ENCODE measurements at regions of chrX and their contacts with region 1.

Region 1: DNA sequence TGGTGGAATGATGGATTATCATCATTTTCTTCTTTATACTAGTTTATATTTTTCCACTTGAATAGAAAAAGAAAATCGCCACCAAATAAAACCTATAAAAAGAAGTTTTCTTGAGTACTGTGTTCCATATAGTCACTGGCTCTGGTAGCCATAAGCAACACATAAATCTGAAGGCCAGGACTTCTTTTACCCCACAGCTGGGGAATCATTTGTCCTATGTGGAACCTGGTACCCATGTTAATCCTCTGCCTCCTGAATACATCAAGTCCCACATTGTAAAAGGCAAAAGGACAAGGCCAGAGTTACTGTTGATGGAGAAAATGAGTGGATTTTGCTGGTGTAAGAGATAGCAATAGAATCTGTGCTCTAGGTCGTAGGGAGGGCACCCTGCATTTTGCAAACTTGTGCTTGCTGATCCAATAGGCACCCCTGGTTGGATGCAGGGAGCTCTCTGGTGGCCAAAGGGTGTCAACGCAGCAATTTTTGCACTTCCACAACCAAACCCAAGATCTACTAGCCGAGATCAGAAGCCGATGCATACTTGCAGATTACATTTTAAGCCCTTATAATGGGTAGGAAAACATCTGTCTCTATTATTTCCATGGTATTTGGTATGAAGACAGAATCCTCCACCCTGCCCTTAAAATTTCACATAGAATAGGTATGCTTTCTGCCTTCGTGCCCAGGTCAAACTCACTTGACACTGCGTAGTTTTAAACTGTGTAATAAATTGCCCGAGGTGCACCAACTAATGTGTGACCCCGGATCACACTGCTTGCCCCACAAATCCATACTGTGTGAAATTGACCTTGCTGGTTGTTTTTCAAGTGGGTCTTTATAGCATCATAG is 146.2 kb upstream of the SCML1 start:
- DNase-seq: peak; percentile 44 to 60 (median 52)
- ATAC-seq: peak; percentile 77 to 90 (median 83)
- H3K4me3 ChIP-seq: peak overlapping the region in 5 of 12 donors; percentile 3 to 43 (median 33)
- H3K27ac ChIP-seq: peak overlapping the region in 5 of 12 donors; percentile 3 to 72 (median 38)
- H3K4me1 ChIP-seq: peaks cover 0 to 19% (median 2%) of the 10 kb centered on the region in 12 donors
- H3K27me3 ChIP-seq: peaks cover 0 to 4% (median 0%) of the 10 kb centered on the region in 9 donors
- CTCF ChIP-seq: peak; percentile 52 to 75 (median 64)
- POLR2A ChIP-seq: no peak

Region 2: DNA sequence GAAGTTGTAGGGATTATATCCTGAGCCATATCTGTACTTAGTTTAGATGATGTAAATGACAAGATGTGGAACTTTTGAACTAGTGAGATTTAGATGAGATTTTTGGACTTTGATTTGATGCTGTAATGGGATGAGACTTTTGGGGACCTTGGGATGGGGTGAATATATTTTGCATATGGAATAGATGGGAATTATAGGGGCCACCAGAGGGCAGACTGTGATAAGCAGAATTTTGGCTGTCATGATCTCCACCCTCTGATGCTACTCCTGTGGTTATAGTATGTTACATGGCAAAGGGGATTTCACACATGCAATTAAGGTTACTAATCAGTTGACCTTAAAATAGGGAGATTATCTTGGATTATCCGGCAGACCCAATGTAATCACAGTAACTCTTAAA is 430.1 kb before region 1 on chrX:
- intact Hi-C with region 1: no loop called
- DNase-seq: no peak
- ATAC-seq: no peak
- H3K4me3 ChIP-seq: no peak overlapping the region
- H3K27ac ChIP-seq: no peak overlapping the region
- H3K4me1 ChIP-seq: no peaks in the 10 kb centered on the region
- H3K27me3 ChIP-seq: no peaks in the 10 kb centered on the region
- CTCF ChIP-seq: no peak
- POLR2A ChIP-seq: no peak

Region 3: DNA sequence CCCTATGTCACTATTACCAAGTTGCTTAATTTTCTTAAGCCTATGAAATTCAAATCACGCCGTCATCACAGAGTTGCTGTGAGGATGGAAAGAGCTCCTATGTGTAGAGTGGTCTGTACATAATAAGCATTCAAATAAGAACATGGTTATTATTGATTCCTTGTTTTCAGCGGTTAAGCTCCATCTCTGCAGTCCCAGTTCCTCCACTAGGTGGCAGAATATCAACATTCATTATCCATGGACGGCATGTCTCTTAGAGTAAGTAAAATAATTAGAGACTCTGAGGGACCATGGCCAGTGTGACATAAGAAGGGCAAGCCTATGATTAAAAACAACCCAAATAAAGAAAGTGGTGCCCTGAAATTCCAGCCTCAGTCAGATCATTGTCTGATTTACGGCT is 348.6 kb before region 1 on chrX:
- intact Hi-C with region 1: loop called (anchors 1 to 10 kb)
- DNase-seq: peak in 2 of 5 donors; percentile 7 to 18
- ATAC-seq: peak in 1 of 4 donors; percentile 55
- H3K4me3 ChIP-seq: no peak overlapping the region
- H3K27ac ChIP-seq: no peak overlapping the region
- H3K4me1 ChIP-seq: no peaks in the 10 kb centered on the region
- H3K27me3 ChIP-seq: peaks cover 0 to 4% (median 0%) of the 10 kb centered on the region in 9 donors
- CTCF ChIP-seq: peak; percentile 56 to 78 (median 70)
- POLR2A ChIP-seq: no peak

Region 4: GRCh38 chrX:17323376-17323775 is 267.7 kb before region 1 on chrX:
- intact Hi-C with region 1: no loop called
- DNase-seq: no peak
- ATAC-seq: no peak
- H3K4me3 ChIP-seq: no peak overlapping the region
- H3K27ac ChIP-seq: no peak overlapping the region
- H3K4me1 ChIP-seq: no peaks in the 10 kb centered on the region
- H3K27me3 ChIP-seq: no peaks in the 10 kb centered on the region
- CTCF ChIP-seq: no peak
- POLR2A ChIP-seq: no peak

Region 5: DNA sequence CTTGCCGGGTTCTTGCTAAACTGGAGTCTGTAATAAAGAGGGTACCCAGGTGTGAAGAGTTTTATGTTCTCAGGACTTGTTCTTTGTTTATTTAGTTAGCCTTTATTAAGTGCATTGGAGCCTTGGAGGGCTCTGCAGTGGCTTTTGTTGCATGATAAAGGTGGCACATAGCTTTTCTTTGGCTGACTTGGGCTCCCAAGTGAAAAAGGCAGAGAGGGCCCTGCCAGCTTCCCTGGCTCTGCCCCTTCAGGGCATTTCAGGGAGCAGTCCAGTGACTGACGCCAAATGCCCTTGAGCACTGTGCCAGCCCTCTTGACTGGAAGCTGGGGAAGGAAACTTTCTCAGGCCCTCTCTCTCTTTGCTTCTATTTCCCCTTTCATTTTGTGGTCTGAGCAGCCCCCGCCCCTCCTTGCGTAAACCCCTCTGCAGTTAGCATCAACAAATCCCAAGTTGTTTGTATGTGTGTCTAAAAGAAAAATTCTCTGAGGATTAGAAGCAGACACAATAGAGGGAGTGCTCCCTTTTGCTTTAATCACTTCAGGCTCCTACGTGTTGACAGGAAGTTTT is 63.9 kb before region 1 on chrX:
- intact Hi-C with region 1: loop called in 4 of 10 experiments (anchors 5 to 10 kb)
- DNase-seq: peak; percentile 43 to 72 (median 59)
- ATAC-seq: peak; percentile 64 to 92 (median 88)
- H3K4me3 ChIP-seq: peak overlapping the region in 1 of 12 donors; percentile 20
- H3K27ac ChIP-seq: peak overlapping the region in 10 of 12 donors; percentile 10 to 84 (median 40)
- H3K4me1 ChIP-seq: peaks cover 0 to 17% (median 6%) of the 10 kb centered on the region in 12 donors
- H3K27me3 ChIP-seq: peaks cover 0 to 4% (median 0%) of the 10 kb centered on the region in 9 donors
- CTCF ChIP-seq: peak in 1 of 12 donors; percentile 9
- POLR2A ChIP-seq: no peak

Region 6: DNA sequence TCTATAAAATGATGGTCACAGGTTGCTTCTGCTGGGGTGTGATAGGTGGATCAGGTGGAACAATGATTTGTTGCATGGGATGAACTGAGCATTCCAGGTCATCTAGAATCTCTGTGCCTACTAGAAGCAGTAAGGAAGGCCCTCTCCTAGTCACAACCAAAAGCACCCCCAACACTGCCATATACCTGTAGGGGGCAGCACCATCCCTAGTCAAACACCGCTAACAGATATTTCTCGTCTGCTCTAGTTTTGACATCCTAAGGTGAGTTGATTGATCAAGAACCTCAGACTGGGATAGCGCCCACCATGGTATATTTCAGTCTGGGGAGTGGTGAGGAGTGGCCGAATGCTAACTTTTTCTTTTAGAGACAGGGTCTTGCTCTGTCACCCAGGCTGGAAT is 55.9 kb before region 1 on chrX:
- intact Hi-C with region 1: loop called in 5 of 10 experiments (anchors 2 to 10 kb)
- DNase-seq: no peak
- ATAC-seq: no peak
- H3K4me3 ChIP-seq: no peak overlapping the region
- H3K27ac ChIP-seq: no peak overlapping the region
- H3K4me1 ChIP-seq: no peaks in the 10 kb centered on the region
- H3K27me3 ChIP-seq: peaks cover 0 to 15% (median 0%) of the 10 kb centered on the region in 9 donors
- CTCF ChIP-seq: peak; percentile 15 to 50 (median 39)
- POLR2A ChIP-seq: no peak